ENCODE measurements at regions of chr5 and their contacts with region 1.

Region 1: GRCh38 chr5:180975338-180975737 is 13.3 kb upstream of the BTNL3 start:
- DNase-seq: peak; percentile 41
- ATAC-seq: peak; percentile 99
- H3K4me3 Mint-ChIP-seq: peak overlapping the region; percentile 47
- H3K27ac Mint-ChIP-seq: peak overlapping the region; percentile 81
- H3K4me1 Mint-ChIP-seq: peaks cover 40% of the 10 kb centered on the region
- H3K27me3 Mint-ChIP-seq: no peaks in the 10 kb centered on the region
- CTCF ChIP-seq: no peak

Region 2: DNA sequence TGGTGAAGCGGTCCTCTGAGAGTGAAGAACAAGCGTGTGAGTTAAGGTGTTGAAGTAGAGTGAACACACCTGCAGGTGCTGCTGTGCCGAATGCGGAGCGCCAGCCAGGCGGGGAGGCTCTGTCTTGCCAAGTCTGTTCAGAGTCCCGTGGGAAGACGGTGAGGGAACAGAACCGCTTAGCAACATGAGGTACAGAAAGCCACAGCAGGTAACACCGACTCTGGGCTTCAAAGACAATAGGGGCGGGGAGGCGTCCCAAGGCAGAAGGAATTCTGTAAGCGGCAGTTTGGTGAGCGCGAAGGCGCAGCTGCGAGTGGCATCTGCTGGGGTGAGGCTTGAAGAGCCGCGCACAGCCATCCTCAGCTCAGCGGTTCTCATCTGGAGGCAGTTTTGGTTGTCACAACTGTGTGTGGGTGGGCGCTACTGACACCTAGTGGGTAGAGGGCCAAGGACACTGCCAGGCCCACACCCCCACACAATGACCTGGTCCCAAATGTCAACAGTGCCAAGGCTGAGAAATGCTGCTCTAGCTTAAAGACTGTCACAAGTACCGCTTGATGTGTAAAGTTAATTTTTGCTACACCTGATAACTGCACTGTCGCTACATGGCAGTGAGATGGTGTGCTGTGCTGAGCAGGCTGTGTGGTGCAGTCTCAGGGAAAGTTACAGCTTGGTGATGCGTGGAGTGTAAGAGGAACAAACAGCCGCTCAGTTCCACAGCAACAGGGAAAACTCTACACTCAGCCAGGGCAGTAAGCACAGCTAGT is 1000.2 kb before region 1 on chr5:
- CTCF ChIA-PET with region 1: no interaction called
- POLR2A ChIA-PET with region 1: no interaction called
- intact Hi-C with region 1: no loop called
- DNase-seq: peak; percentile 58
- ATAC-seq: peak; percentile 84
- H3K4me3 Mint-ChIP-seq: no peak overlapping the region
- H3K27ac Mint-ChIP-seq: peak overlapping the region; percentile 76
- H3K4me1 Mint-ChIP-seq: peaks cover 51% of the 10 kb centered on the region
- H3K27me3 Mint-ChIP-seq: no peaks in the 10 kb centered on the region
- CTCF ChIP-seq: no peak

Region 3: GRCh38 chr5:180233729-180234128 is 741.6 kb before region 1 on chr5:
- CTCF ChIA-PET with region 1: no interaction called
- POLR2A ChIA-PET with region 1: no interaction called
- intact Hi-C with region 1: no loop called
- DNase-seq: no peak
- ATAC-seq: no peak
- H3K4me3 Mint-ChIP-seq: no peak overlapping the region
- H3K27ac Mint-ChIP-seq: no peak overlapping the region
- H3K4me1 Mint-ChIP-seq: no peaks in the 10 kb centered on the region
- H3K27me3 Mint-ChIP-seq: no peaks in the 10 kb centered on the region
- CTCF ChIP-seq: no peak

Region 4: DNA sequence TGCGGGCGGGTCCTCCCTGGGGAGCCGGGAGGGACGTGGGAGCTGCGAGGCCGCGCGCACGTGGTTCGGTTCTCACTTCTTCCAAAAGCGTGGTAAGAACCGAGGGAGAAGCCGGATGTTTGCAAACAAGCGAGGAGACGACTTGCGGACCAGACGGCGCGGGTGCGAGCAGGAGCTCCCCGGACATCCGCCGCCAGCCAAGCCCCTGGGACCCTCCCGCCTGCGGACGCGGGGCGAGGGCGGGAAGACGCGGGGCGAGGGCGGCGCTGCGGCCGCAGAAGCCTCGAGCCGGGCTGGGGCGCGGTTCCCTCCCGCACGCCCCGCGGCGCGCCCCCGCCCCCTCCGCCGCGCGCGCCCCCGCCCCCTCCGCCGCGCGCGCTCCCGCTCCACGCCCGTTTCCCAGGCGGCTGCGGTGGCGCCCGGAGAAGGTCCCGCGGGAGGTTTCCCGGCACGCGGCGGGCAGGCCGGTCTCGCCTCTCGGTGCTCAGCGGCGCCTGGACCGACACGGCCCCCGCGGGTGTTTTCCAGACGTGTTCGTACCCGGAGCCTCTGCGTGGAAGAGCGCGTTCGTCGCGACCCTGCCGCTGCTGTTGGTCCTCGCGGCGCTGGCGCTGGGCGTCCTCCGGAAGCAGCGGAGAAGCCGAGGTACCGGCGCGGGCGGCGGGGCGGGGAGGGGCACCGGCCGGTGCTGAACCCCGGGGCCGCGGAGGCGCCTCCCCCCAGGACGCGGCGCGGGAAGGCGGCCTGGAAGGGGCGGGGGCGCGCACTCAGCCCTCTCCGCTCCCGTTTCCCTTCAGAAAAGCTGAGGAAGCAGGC is 77.5 kb after region 1 on chr5:
- CTCF ChIA-PET with region 1: no interaction called
- POLR2A ChIA-PET with region 1: interaction called, 4 read pairs
- intact Hi-C with region 1: loop called (anchors 1 kb)
- DNase-seq: peak; percentile 42
- ATAC-seq: peak; percentile 35
- H3K4me3 Mint-ChIP-seq: peak overlapping the region; percentile 85
- H3K27ac Mint-ChIP-seq: peak overlapping the region; percentile 70
- H3K4me1 Mint-ChIP-seq: peaks cover 46% of the 10 kb centered on the region
- H3K27me3 Mint-ChIP-seq: peaks cover 52% of the 10 kb centered on the region
- CTCF ChIP-seq: no peak

Measured in activated B cell treated with CpG ODN at 0.5 μM for 24 hours (primary cell).